Endothelial cell of umbilical vein (primary cell): ENCODE measurements at regions of chr11 and their contacts with region 1.

Region 1: DNA sequence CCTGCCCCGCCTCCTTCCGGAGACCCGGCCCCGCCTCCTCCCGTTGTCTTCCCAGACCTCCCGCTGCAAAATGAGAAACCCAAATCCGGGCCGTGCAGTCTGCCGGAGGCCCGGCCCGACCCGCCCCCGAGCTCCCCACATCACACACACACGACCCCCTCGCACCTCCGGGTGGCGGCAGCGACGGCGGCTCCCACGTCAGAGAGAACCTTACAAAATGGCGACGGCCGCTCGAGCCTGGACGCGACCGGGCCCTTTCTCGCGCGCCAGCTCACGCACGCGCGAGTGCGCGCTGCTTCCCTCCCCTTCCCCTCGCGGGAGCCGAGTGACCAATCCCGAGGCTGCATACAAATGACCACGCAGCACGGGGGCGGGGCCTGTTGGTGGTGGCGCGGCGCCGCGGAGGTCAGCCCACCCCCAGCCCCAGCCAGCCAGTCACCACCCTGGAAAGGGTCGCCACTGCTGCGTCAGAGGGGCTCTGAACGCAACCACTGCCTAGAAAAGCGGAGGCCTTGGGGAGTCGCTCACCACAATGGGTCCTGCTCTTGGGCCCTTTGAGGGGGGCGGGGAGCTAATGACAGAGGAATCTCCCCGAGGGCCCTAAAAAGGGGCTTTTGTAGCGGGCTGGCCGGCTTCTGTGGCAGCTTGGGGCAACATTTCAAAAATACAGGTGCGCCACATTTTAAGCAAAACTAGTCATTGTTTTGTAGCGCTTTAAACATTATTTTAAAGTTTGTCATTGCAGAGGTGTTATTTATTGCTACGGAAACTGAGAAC is at the start of gene RBM4B:
- DNase-seq: peak; percentile 97
- H3K4me3 ChIP-seq: peak within 1 kb of the TSS; percentile 65 to 86 (median 76)
- H3K27ac ChIP-seq: peak within 1 kb of the TSS; percentile 87
- H3K4me1 ChIP-seq: peaks cover 17% of the 10 kb centered on the region
- H3K27me3 ChIP-seq: no peaks in the 10 kb centered on the region
- CTCF ChIP-seq: no peak
- POLR2A ChIP-seq: peak; percentile 79
- total RNA-seq, gene RBM4B: 19.4 and 22.2 TPM in 2 replicates

Region 2: GRCh38 chr11:66408488-66409214 is 269.1 kb before region 1 on chr11:
- CTCF ChIA-PET with region 1: interaction called, 43 read pairs
- POLR2A ChIA-PET with region 1: no interaction called
- dilution Hi-C with region 1: no loop called
- intact Hi-C with region 1: loop called (anchors 1 kb)
- DNase-seq: peak; percentile 82
- H3K4me3 ChIP-seq: no peak overlapping the region
- H3K27ac ChIP-seq: no peak overlapping the region
- H3K4me1 ChIP-seq: no peaks in the 10 kb centered on the region
- H3K27me3 ChIP-seq: peaks cover 8 to 10% of the 10 kb centered on the region in 2 experiments
- CTCF ChIP-seq: peak; percentile 100
- POLR2A ChIP-seq: no peak

Region 3: DNA sequence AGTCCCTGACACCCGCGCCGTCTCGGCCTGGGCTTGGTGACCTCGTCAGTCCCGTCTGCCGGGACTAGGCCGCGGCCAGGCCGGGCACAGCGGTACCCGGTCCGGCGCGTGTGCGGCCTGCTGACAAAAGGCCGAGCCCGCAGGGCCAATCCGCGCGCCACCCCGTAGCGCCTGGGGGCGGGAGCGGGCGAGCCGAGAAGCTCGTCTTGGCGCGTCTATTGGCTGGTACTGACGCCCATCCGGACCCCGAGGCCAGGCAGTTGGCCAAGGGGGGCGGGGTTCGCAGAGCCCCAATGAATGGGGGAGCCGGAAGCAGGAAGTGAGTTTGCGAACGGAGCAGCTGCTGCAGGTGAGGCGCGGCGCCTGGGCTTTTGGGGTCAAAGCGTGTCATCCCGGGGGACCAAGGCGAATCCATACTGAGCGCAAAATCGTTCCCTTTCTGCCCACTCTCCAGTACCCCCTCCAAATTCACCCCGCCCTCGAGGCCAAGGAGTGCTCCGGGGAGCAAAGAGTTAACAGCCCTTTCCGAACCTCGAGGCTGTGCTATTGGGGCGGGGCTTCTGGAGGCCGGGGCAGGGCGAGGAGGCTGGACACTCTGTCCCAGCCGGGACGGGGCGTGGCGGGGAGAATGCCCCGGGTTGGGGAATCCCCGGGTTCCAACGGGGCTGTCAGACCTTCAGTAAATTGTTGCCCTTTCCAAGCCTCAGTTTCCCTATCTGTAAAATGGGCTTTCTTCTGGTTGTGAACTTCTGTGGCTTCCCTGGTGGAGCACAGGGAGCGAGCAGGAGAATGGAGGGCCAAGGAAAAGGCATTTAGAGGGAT is 197.5 kb before region 1 on chr11 and contains the start of gene DPP3:
- CTCF ChIA-PET with region 1: interaction called, 7 read pairs
- POLR2A ChIA-PET with region 1: interaction called, 3 read pairs
- dilution Hi-C with region 1: no loop called
- intact Hi-C with region 1: loop called (anchors 1 kb)
- DNase-seq: peak; percentile 98
- H3K4me3 ChIP-seq: peak within 1 kb of the TSS; percentile 71 to 89 (median 86)
- H3K27ac ChIP-seq: peak within 1 kb of the TSS; percentile 96
- H3K4me1 ChIP-seq: peaks cover 10% of the 10 kb centered on the region
- H3K27me3 ChIP-seq: no peaks in the 10 kb centered on the region
- CTCF ChIP-seq: no peak
- POLR2A ChIP-seq: peak; percentile 96
- total RNA-seq, gene DPP3: 46.4 and 56.0 TPM in 2 replicates

Region 4: DNA sequence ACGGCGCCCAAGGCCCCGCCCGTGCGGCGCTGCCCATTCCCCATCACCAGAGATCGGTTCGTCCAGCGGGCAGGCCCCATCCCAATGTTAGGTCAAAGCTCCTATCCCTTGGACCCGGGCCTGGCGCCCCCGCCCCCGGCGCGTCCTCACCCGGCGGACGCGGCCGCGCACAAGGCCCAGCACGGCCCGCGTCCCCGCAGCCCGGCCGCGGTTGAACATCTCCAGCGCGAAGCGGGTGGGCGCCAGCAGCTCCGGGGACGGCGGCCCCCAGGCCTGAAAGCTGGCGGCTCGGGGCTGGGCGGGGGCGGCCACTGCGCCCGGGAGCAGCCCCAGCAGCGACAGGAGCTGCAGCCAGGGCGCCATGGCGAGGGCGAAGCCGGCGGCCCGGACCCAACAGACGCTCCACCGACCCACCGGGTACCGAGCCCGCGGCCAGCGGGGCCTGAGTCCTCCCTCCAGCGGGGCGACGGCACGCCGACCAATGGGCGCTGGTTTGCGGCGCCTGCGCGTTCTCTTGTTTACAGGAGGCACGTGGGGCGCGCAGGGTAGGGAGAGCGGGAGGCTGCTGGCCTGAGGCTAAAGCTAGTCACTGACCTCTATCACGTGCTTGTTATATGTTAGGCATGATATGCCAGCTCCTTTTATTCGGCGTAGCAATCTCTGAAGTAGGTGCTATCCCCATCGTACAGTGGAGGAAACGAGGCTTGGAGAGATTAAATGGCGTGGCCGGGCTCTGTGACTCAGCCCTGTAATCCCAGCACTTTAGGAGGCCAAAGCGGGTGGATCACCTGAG is 109.5 kb before region 1 on chr11 and contains the start of gene CTSF:
- CTCF ChIA-PET with region 1: interaction called, 18 read pairs
- POLR2A ChIA-PET with region 1: no interaction called
- dilution Hi-C with region 1: no loop called
- intact Hi-C with region 1: no loop called
- DNase-seq: peak; percentile 85
- H3K4me3 ChIP-seq: peak within 1 kb of the TSS in 1 of 3 experiments; percentile 44
- H3K27ac ChIP-seq: no peak within 1 kb of the TSS
- H3K4me1 ChIP-seq: peaks cover 3% of the 10 kb centered on the region
- H3K27me3 ChIP-seq: no peaks in the 10 kb centered on the region
- CTCF ChIP-seq: no peak
- POLR2A ChIP-seq: no peak
- total RNA-seq, gene CTSF: 11.0 and 14.4 TPM in 2 replicates

Region 5: GRCh38 chr11:66592457-66593302 is 85.1 kb before region 1 on chr11 and contains the starts of genes CCDC87 and CCS:
- CTCF ChIA-PET with region 1: interaction called, 11 read pairs
- POLR2A ChIA-PET with region 1: no interaction called
- dilution Hi-C with region 1: no loop called
- intact Hi-C with region 1: loop called (anchors 5 kb)
- DNase-seq: peak; percentile 97
- H3K4me3 ChIP-seq: peak within 1 kb of the TSS; percentile 22 to 63 (median 60)
- H3K27ac ChIP-seq: no peak within 1 kb of the TSS
- H3K4me1 ChIP-seq: peaks cover 5% of the 10 kb centered on the region
- H3K27me3 ChIP-seq: peaks cover 0 to 2% of the 10 kb centered on the region in 2 experiments
- CTCF ChIP-seq: peak; percentile 73 to 87
- POLR2A ChIP-seq: peak; percentile 98
- total RNA-seq, gene CCDC87: 0.22 and 0.28 TPM in 2 replicates
- total RNA-seq, gene CCS: 37.2 and 38.7 TPM in 2 replicates

Region 6: DNA sequence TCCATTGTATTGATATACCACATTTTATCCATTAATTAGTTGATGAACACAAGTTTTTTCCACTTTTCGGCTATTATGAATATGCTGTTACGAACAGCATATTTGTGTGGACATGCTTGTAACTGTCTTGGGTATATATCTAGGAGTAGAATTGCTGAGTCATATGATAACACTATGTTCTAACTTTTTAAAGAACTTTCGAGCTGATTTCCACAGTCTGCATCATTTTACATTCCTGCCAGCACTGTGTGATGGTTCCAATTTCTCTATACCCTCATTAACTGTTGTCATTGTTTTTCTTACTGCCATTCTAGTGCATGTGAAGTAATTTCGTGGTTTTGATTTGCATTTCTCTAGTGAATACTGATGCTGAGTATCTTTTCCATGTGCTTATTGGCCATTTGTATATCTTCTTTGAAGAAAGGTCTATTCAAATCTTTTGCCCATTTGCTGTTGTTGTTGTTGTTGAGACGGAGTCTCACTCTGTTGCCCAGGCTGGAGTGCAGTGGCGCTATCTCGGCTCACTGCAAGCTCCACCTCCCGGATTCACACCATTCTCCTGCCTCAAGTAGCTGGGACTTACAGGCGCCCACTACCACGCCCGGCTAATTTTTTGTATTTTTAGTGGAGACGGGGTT is 158.1 kb after region 1 on chr11:
- CTCF ChIA-PET with region 1: interaction called, 17 read pairs
- POLR2A ChIA-PET with region 1: no interaction called
- dilution Hi-C with region 1: no loop called
- intact Hi-C with region 1: loop called (anchors 5 kb)
- DNase-seq: no peak
- H3K4me3 ChIP-seq: no peak overlapping the region
- H3K27ac ChIP-seq: no peak overlapping the region
- H3K4me1 ChIP-seq: peaks cover 4% of the 10 kb centered on the region
- H3K27me3 ChIP-seq: no peaks in the 10 kb centered on the region
- CTCF ChIP-seq: no peak
- POLR2A ChIP-seq: no peak